ENCODE measurements at regions of chr6 and their contacts with region 1.

Region 1: DNA sequence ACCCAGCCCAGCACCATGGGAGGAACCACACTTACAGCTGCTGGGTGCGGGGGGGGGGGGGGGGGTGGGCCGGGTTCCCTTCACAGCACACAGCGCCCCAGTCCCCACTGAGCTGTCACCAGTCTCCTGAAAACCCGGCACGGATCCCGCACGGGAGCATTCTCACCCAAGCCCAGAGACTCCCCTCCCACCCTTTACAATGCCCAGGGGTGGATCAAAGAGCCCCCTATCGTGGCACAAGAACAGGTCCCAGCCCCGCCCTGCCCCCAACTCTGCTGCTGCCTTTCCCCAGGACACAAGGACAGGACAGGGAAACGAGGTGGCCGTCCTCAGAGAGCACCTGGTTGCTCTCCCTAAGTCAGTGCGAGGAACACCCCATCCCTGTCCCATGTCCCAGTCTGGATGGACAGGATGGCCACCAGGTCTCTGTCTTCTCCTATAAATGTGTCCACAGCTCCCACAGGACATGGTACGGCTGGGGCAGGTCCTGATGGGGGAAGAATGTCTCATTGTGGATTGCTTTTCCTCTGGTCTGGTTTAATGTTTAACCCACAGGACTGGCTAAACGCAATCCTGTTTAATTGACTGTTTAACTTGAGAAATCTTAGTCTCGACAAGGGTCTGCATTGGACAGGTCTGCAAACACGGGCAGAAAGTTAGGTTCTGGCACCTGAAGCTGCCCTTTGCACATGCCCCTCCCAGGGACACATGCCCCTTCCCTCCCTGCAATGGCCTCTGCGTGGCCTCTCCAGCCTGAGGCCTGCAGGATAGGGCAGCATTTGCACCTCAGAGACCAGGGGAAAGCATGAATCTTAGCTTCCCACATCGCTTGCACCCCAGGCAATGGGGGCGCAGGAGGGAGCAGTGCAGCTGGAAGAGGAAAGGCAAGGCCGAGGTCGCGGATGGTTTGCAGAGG is 45.3 kb downstream of the DACT2 start:
- DNase-seq: peak; percentile 98
- ATAC-seq: peak; percentile 90
- H3K4me3 ChIP-seq: peak overlapping the region; percentile 13 to 71 (median 45); a peak in 5 of 6 replicates
- H3K27ac ChIP-seq: peak overlapping the region; percentile 45
- H3K4me1 ChIP-seq: peaks cover 40% of the 10 kb centered on the region
- H3K27me3 ChIP-seq: no peaks in the 10 kb centered on the region; a peak in 1 of 5 replicates
- CTCF ChIP-seq: peak; percentile 22; the same call in 1 of the 2 replicates
- EP300 ChIP-seq: peak in 1 of 2 experiments; percentile 87; a peak in 1 of 4 replicates
- POLR2A ChIP-seq: no peak
- RAD21 ChIP-seq: 0 out of 2 replicates have a peak, but pooled peaks have one; percentile 25

Region 2: GRCh38 chr6:167796192-167796996 is 477.9 kb before region 1 on chr6:
- CTCF ChIA-PET with region 1: no interaction called
- POLR2A ChIA-PET with region 1: no interaction called
- in situ Hi-C with region 1: no loop called
- intact Hi-C with region 1: no loop called
- DNase-seq: no peak
- ATAC-seq: peak; percentile 11; the same call in 1 of the 3 replicates
- H3K4me3 ChIP-seq: no peak overlapping the region
- H3K27ac ChIP-seq: no peak overlapping the region
- H3K4me1 ChIP-seq: peaks cover 23% of the 10 kb centered on the region
- H3K27me3 ChIP-seq: peaks cover 0 to 2% of the 10 kb centered on the region in 2 experiments; a peak in 2 of 5 replicates
- CTCF ChIP-seq: no peak
- EP300 ChIP-seq: no peak
- POLR2A ChIP-seq: no peak
- RAD21 ChIP-seq: no peak

Region 3: GRCh38 chr6:168201383-168201782 is 72.9 kb before region 1 on chr6:
- CTCF ChIA-PET with region 1: no interaction called
- POLR2A ChIA-PET with region 1: interaction called, 5 read pairs
- in situ Hi-C with region 1: no loop called
- intact Hi-C with region 1: loop called (anchors 2 kb)
- DNase-seq: peak; percentile 63
- ATAC-seq: peak; percentile 85
- H3K4me3 ChIP-seq: peak overlapping the region in 2 of 3 experiments; percentile 25 to 45; a peak in 1 of 6 replicates
- H3K27ac ChIP-seq: peak overlapping the region; percentile 59
- H3K4me1 ChIP-seq: peaks cover 59% of the 10 kb centered on the region
- H3K27me3 ChIP-seq: no peaks in the 10 kb centered on the region
- CTCF ChIP-seq: peak; percentile 91
- EP300 ChIP-seq: no peak
- POLR2A ChIP-seq: no peak
- RAD21 ChIP-seq: peak; percentile 93

Region 4: GRCh38 chr6:168226061-168226752 is 48.1 kb before region 1 on chr6:
- CTCF ChIA-PET with region 1: no interaction called
- POLR2A ChIA-PET with region 1: no interaction called
- in situ Hi-C with region 1: no loop called
- intact Hi-C with region 1: loop called (anchors 2 kb)
- DNase-seq: no peak
- ATAC-seq: peak; percentile 58
- H3K4me3 ChIP-seq: no peak overlapping the region
- H3K27ac ChIP-seq: no peak overlapping the region
- H3K4me1 ChIP-seq: peaks cover 14% of the 10 kb centered on the region
- H3K27me3 ChIP-seq: peaks cover 7 to 50% of the 10 kb centered on the region in 2 experiments; a peak in 4 of 5 replicates
- CTCF ChIP-seq: peak; percentile 65
- EP300 ChIP-seq: no peak
- POLR2A ChIP-seq: no peak
- RAD21 ChIP-seq: 0 out of 2 replicates have a peak, but pooled peaks have one; percentile 14

Region 5: GRCh38 chr6:168255283-168255881 is 18.9 kb before region 1 on chr6:
- CTCF ChIA-PET with region 1: no interaction called
- POLR2A ChIA-PET with region 1: no interaction called
- in situ Hi-C with region 1: no loop called
- intact Hi-C with region 1: no loop called
- DNase-seq: no peak
- ATAC-seq: no peak
- H3K4me3 ChIP-seq: no peak overlapping the region
- H3K27ac ChIP-seq: no peak overlapping the region
- H3K4me1 ChIP-seq: peaks cover 24% of the 10 kb centered on the region
- H3K27me3 ChIP-seq: no peaks in the 10 kb centered on the region
- CTCF ChIP-seq: no peak
- EP300 ChIP-seq: no peak
- POLR2A ChIP-seq: no peak
- RAD21 ChIP-seq: no peak

Region 6: DNA sequence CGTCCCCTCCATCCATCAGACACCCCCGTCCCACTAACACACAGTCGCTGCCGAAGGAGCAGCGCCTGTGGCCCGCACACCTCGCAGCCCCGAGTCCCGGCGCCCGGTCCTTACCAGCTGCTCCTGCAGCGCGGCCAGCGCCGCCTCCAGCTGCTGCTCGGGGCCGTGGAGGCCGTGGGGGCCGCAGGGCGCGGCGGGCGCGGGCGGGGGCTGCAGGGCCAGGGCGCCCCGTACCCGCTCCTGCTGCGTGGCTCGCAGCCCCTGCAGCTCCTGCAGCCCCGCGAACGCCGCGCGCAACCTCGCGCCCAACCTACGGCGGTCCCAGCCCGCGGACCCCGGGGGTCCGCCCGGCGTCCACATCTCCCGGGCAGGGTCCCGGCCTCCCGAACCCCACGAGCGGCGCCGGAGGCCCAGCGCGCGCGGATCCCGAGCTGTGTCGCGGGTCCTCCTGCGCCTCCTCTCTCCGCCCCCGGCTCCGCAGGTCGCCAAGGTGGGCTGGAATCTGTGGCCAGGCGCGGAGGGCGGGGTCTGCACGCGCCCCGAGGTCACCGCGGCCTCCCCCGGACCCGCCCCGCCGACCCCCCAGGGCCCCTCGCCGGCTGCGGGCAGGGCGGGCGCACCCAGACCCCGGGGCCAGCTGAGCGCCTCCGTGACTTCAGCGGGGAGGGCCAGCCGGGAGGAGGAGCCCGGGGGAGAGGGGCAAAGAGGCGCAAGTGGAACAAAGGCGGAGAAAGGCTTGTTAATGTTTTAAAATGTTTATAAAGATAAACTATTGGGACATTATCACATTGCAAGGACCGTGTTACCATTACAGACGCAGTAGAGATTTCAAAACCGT is 45.2 kb after region 1 on chr6 and contains the start of gene DACT2:
- CTCF ChIA-PET with region 1: no interaction called
- POLR2A ChIA-PET with region 1: no interaction called
- in situ Hi-C with region 1: loop called (anchors 5 kb)
- intact Hi-C with region 1: no loop called
- DNase-seq: no peak
- ATAC-seq: peak; percentile 28; the same call in 2 of the 3 replicates
- H3K4me3 ChIP-seq: peak within 1 kb of the TSS in 2 of 3 experiments; percentile 36 to 37; a peak in 3 of 6 replicates
- H3K27ac ChIP-seq: no peak within 1 kb of the TSS
- H3K4me1 ChIP-seq: peaks cover 45% of the 10 kb centered on the region
- H3K27me3 ChIP-seq: peaks cover 0 to 7% of the 10 kb centered on the region in 2 experiments; a peak in 2 of 5 replicates
- CTCF ChIP-seq: no peak
- EP300 ChIP-seq: no peak
- POLR2A ChIP-seq: no peak
- RAD21 ChIP-seq: no peak
- total RNA-seq, gene DACT2: not detected in 2 replicates

Region 7: GRCh38 chr6:168326294-168327261 is 52.3 kb after region 1 on chr6:
- CTCF ChIA-PET with region 1: no interaction called
- POLR2A ChIA-PET with region 1: interaction called, 15 read pairs
- in situ Hi-C with region 1: loop called (anchors 5 kb)
- intact Hi-C with region 1: no loop called
- DNase-seq: peak; percentile 99
- ATAC-seq: peak; percentile 99
- H3K4me3 ChIP-seq: peak overlapping the region; percentile 22 to 51 (median 30); a peak in 4 of 6 replicates
- H3K27ac ChIP-seq: peak overlapping the region; percentile 94
- H3K4me1 ChIP-seq: peaks cover 74% of the 10 kb centered on the region
- H3K27me3 ChIP-seq: no peaks in the 10 kb centered on the region
- CTCF ChIP-seq: no peak
- EP300 ChIP-seq: peak; percentile 53 to 95; a peak in 2 of 4 replicates
- POLR2A ChIP-seq: peak; percentile 21 to 65; a peak in 2 of 4 replicates
- RAD21 ChIP-seq: peak; percentile 26; the same call in 1 of the 2 replicates